Activated CD4-positive, alpha-beta T cell treated with anti-CD3 and anti-CD28 coated beads for 36 hours (primary cell): ENCODE measurements at regions of chr11 and their contacts with region 1.

Region 1: GRCh38 chr11:7571640-7572000 is 57.8 kb downstream of the PPFIBP2 start:
- DNase-seq: peak; percentile 47
- ATAC-seq: no peak
- H3K4me3 Mint-ChIP-seq: no peak overlapping the region
- H3K27ac Mint-ChIP-seq: no peak overlapping the region
- H3K4me1 Mint-ChIP-seq: peaks cover 19% of the 10 kb centered on the region
- H3K27me3 Mint-ChIP-seq: peaks cover 9% of the 10 kb centered on the region

Region 2: GRCh38 chr11:7665473-7666291 is 94.1 kb after region 1 on chr11:
- CTCF ChIA-PET with region 1: interaction called, 6 read pairs
- POLR2A ChIA-PET with region 1: no interaction called
- intact Hi-C with region 1: loop called (anchors 1 to 2 kb)
- DNase-seq: peak; percentile 90
- ATAC-seq: peak; percentile 98
- H3K4me3 Mint-ChIP-seq: no peak overlapping the region
- H3K27ac Mint-ChIP-seq: no peak overlapping the region
- H3K4me1 Mint-ChIP-seq: peaks cover 6% of the 10 kb centered on the region
- H3K27me3 Mint-ChIP-seq: no peaks in the 10 kb centered on the region

Region 3: DNA sequence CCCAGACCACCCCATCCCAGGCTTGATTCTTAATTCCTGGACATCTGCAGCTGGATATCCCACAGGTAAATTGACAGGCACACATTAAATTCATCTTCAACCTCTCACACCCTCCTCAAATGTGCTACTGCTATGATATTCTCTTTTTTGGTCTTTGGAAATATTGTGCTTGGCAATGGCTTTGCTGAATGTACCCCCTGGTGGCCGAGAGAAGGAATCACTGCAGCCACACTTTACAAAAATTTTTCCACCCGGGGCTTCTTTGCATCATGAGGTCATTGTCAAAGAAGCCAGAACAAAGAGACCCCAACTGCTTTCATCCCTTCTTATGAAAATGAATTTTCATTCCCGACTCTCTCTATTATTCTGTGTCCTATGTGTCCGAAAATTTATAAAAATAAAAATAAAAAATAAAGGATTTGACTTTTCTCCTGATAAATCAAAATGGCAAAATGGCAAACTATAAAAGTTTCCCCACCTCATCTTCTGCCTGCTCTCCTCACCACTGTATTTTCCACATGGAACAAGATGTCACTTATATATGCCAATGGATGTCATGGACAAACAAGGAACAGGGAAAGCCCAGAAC is 116.7 kb after region 1 on chr11:
- CTCF ChIA-PET with region 1: interaction called, 5 read pairs
- POLR2A ChIA-PET with region 1: no interaction called
- intact Hi-C with region 1: loop called in 1 of 2 experiments (anchors 5 kb)
- DNase-seq: peak; percentile 38
- ATAC-seq: peak; percentile 44
- H3K4me3 Mint-ChIP-seq: no peak overlapping the region
- H3K27ac Mint-ChIP-seq: no peak overlapping the region
- H3K4me1 Mint-ChIP-seq: peaks cover 5% of the 10 kb centered on the region
- H3K27me3 Mint-ChIP-seq: peaks cover 30% of the 10 kb centered on the region

Region 4: GRCh38 chr11:7696424-7696823 is 124.8 kb after region 1 on chr11:
- CTCF ChIA-PET with region 1: no interaction called
- POLR2A ChIA-PET with region 1: no interaction called
- intact Hi-C with region 1: loop called in 1 of 2 experiments (anchors 2 kb)
- DNase-seq: peak; percentile 20
- ATAC-seq: peak; percentile 75
- H3K4me3 Mint-ChIP-seq: no peak overlapping the region
- H3K27ac Mint-ChIP-seq: no peak overlapping the region
- H3K4me1 Mint-ChIP-seq: peaks cover 4% of the 10 kb centered on the region
- H3K27me3 Mint-ChIP-seq: peaks cover 24% of the 10 kb centered on the region